ENCODE measurements at regions of chr1 and their contacts with region 1.

Region 1: GRCh38 chr1:168553680-168554553 is 10.1 kb upstream of the XCL2 start:
- DNase-seq: peak in 2 of 9 experiments; percentile 23 to 44
- ATAC-seq: peak; percentile 23
- H3K4me3 ChIP-seq: no peak overlapping the region
- H3K4me3 Mint-ChIP-seq: peak overlapping the region; percentile 3
- H3K27ac ChIP-seq: peak overlapping the region in 1 of 2 experiments; percentile 34
- H3K27ac Mint-ChIP-seq: peak overlapping the region; percentile 66
- H3K4me1 ChIP-seq: peaks cover 31% of the 10 kb centered on the region
- H3K4me1 Mint-ChIP-seq: peaks cover 61% of the 10 kb centered on the region
- H3K27me3 ChIP-seq: no peaks in the 10 kb centered on the region
- H3K27me3 Mint-ChIP-seq: no peaks in the 10 kb centered on the region
- CTCF ChIP-seq: no peak

Region 2: GRCh38 chr1:168520052-168520751 is 33.7 kb before region 1 on chr1:
- CTCF ChIA-PET with region 1: interaction called, 4 read pairs
- POLR2A ChIA-PET with region 1: no interaction called
- intact Hi-C with region 1: loop called in 1 of 2 experiments (anchors 5 kb)
- DNase-seq: peak in 7 of 9 experiments; percentile 24 to 89 (median 66)
- ATAC-seq: peak; percentile 93
- H3K4me3 ChIP-seq: peak overlapping the region in 1 of 2 experiments; percentile 16
- H3K4me3 Mint-ChIP-seq: peak overlapping the region; percentile 69
- H3K27ac ChIP-seq: peak overlapping the region; percentile 7 to 65
- H3K27ac Mint-ChIP-seq: peak overlapping the region; percentile 92
- H3K4me1 ChIP-seq: peaks cover 63% of the 10 kb centered on the region
- H3K4me1 Mint-ChIP-seq: peaks cover 64% of the 10 kb centered on the region
- H3K27me3 ChIP-seq: no peaks in the 10 kb centered on the region
- H3K27me3 Mint-ChIP-seq: no peaks in the 10 kb centered on the region
- CTCF ChIP-seq: no peak